GM12878 (cell line): ENCODE measurements at regions of chr12 and their contacts with region 1.

Region 1: DNA sequence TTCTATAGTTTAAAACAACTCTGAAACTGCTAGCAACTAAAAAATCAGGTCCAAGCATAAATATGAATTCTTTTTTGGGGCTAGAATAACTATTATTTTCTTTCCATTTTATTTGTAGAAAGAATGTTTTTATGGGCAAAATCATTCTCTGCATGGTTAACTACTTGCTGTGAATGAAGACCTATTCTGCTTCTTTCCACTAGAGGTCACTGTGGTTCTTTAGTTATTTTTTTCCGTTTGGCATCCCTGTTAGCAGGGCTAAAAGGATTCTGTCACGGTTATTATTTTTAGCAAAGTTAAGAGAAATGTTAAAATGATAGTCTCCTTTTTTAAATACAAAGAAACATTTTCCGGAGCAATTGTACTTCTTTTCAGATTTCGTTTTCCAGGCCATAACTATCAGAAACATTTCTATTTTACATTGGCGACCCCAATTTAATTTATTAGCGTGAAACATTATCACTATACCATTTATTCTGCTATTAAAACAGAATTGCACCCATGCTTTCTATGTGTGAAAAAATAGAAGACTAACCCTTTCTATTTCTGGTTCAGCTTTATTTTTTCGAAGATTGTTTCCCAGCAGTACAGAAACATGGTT is 404.8 kb downstream of the ATP23 start:
- DNase-seq: no peak
- ATAC-seq: peak; percentile 71
- H3K4me3 ChIP-seq: no peak overlapping the region
- H3K27ac ChIP-seq: no peak overlapping the region
- H3K4me1 ChIP-seq: no peaks in the 10 kb centered on the region
- H3K27me3 ChIP-seq: no peaks in the 10 kb centered on the region; a peak in 1 of 4 replicates
- CTCF ChIP-seq: peak; percentile 67 to 69 (median 68); a peak in 5 of 6 replicates
- EP300 ChIP-seq: no peak
- POLR2A ChIP-seq: no peak
- RAD21 ChIP-seq: peak; percentile 92

Region 2: GRCh38 chr12:58233886-58234285 is 112.2 kb before region 1 on chr12:
- CTCF ChIA-PET with region 1: no interaction called
- POLR2A ChIA-PET with region 1: no interaction called
- RAD21 ChIA-PET with region 1: no interaction called
- SMC1A ChIA-PET with region 1: no interaction called
- in situ Hi-C with region 1: no loop called
- intact Hi-C with region 1: no loop called
- DNase-seq: no peak
- ATAC-seq: no peak
- H3K4me3 ChIP-seq: no peak overlapping the region
- H3K27ac ChIP-seq: no peak overlapping the region
- H3K4me1 ChIP-seq: no peaks in the 10 kb centered on the region
- H3K27me3 ChIP-seq: no peaks in the 10 kb centered on the region
- CTCF ChIP-seq: no peak
- EP300 ChIP-seq: no peak
- POLR2A ChIP-seq: no peak
- RAD21 ChIP-seq: no peak

Region 3: GRCh38 chr12:58372298-58372697 is 26.2 kb after region 1 on chr12:
- CTCF ChIA-PET with region 1: interaction called, 13 read pairs
- POLR2A ChIA-PET with region 1: no interaction called
- RAD21 ChIA-PET with region 1: interaction called, 7 read pairs
- SMC1A ChIA-PET with region 1: interaction called, 6 read pairs
- in situ Hi-C with region 1: no loop called
- intact Hi-C with region 1: no loop called
- DNase-seq: peak; percentile 60
- ATAC-seq: peak; percentile 99
- H3K4me3 ChIP-seq: no peak overlapping the region
- H3K27ac ChIP-seq: no peak overlapping the region
- H3K4me1 ChIP-seq: no peaks in the 10 kb centered on the region
- H3K27me3 ChIP-seq: no peaks in the 10 kb centered on the region
- CTCF ChIP-seq: no peak
- EP300 ChIP-seq: 0 out of 4 replicates have a peak, but pooled peaks of 1 of the 2 experiments have one; percentile 13
- POLR2A ChIP-seq: no peak
- RAD21 ChIP-seq: no peak

Region 4: DNA sequence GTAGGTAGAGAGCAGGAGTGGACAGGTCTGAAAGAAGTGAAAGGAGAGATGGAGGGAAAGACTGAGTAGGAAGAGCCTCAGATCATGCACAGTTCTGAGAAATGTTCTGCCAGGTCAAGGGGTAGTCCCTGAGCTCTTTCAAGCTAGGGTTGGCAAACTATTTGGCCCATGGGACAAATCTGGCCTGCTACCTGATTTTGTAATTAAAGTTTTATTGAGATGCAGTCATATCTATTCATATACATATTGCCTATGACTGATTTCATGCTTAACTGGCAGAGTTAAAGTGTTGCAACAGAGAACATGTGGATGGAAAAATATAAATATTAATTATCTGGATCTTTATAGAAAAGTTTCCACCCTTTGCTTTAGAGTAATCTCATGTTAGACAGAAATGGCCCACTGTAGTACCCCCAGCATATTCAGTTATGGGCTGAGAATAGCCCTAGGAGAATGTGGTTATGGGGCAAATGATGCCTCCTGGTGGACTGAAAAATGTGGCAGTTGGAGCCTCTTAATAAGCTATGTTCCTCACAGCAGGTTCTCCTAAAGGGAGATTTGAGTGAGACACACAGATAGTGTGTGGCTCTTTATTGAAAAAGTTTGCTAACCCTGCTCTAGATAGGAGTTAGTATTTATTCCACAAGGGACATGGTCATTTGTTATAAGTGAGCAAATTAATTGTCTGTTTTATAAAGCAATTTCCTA is 97.3 kb after region 1 on chr12:
- CTCF ChIA-PET with region 1: interaction called, 54 read pairs
- POLR2A ChIA-PET with region 1: no interaction called
- RAD21 ChIA-PET with region 1: interaction called, 22 read pairs
- SMC1A ChIA-PET with region 1: interaction called, 36 read pairs
- in situ Hi-C with region 1: loop called (anchors 5 kb)
- intact Hi-C with region 1: loop called (anchors 1 kb)
- DNase-seq: no peak
- ATAC-seq: peak; percentile 85
- H3K4me3 ChIP-seq: no peak overlapping the region
- H3K27ac ChIP-seq: no peak overlapping the region
- H3K4me1 ChIP-seq: no peaks in the 10 kb centered on the region
- H3K27me3 ChIP-seq: no peaks in the 10 kb centered on the region
- CTCF ChIP-seq: peak; percentile 62 to 71 (median 65); a peak in 5 of 6 replicates
- EP300 ChIP-seq: no peak
- POLR2A ChIP-seq: no peak
- RAD21 ChIP-seq: peak; percentile 70

Region 5: DNA sequence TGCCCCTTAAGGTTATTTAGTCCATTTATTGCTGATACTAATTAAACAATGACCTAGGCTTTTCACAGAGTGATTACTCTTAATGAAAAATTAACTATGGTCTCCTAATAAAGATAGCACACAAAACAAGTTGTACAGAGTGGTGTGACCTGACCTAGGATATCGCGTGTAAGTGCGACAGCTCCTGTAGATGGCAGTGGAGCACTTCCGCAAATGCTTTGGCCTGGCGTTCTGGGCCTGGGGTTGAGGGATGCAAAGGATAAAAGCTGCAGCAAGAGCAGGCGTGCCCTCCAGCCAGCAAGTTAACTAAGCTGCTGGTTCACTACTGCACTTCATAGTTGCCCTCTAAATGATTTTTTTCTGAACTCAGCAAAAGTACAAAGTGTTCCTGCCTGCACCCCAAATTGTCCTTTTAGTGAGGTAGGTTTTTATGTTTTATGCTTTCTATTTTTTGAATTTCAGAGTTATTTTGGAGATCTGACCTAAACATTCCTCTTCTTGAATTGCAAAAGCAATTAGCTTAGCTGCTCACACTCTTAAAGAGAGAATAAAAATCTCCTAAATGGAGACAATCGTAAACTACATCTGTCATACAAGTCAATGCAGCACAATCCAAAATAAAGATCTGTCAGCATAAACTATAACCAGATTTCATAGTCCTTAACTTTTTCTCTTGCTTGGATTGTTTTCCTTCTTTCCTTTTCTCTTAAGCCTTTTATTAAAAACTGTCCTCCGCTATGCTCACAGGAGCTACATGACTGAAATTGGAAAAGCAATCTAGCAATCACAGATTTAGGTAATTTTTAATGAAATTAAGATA is 194.6 kb after region 1 on chr12:
- CTCF ChIA-PET with region 1: interaction called, 4 read pairs
- POLR2A ChIA-PET with region 1: no interaction called
- RAD21 ChIA-PET with region 1: no interaction called
- SMC1A ChIA-PET with region 1: interaction called, 3 read pairs
- in situ Hi-C with region 1: no loop called
- intact Hi-C with region 1: loop called (anchors 5 kb)
- DNase-seq: peak; percentile 3
- ATAC-seq: peak; percentile 92
- H3K4me3 ChIP-seq: no peak overlapping the region
- H3K27ac ChIP-seq: no peak overlapping the region
- H3K4me1 ChIP-seq: no peaks in the 10 kb centered on the region
- H3K27me3 ChIP-seq: no peaks in the 10 kb centered on the region
- CTCF ChIP-seq: peak; percentile 52 to 74 (median 63)
- EP300 ChIP-seq: no peak
- POLR2A ChIP-seq: no peak
- RAD21 ChIP-seq: peak; percentile 69

Region 6: DNA sequence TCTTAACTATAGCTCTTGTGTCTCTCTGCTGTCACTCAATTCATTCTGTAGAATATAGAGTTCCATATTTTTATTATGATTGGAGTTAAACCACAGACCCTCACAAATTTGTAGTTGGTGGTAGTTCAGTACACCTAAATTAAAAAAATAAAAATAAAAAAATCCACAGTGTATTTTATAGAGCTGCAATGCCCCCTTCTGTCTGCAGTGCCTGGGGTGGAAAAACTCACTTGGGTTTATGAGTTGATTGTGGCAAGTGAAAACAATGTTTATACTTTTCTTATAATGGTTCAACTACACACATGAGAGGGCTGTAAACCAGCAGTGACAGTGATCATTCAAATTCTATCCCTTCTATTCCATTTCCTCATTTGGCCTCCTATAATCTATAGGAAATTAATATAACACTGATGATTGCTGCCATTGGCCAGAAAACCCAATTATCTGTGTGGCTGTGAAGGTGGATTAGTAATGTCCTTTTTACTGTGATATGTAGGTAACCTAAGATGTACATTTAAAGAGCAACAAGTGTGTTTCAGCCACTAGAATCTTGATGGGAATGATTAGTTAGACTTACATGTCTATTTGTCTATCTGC is 741.0 kb after region 1 on chr12:
- CTCF ChIA-PET with region 1: no interaction called
- POLR2A ChIA-PET with region 1: no interaction called
- RAD21 ChIA-PET with region 1: no interaction called
- SMC1A ChIA-PET with region 1: no interaction called
- in situ Hi-C with region 1: no loop called
- intact Hi-C with region 1: loop called (anchors 10 kb)
- DNase-seq: no peak
- ATAC-seq: no peak
- H3K4me3 ChIP-seq: no peak overlapping the region
- H3K27ac ChIP-seq: no peak overlapping the region
- H3K4me1 ChIP-seq: no peaks in the 10 kb centered on the region
- H3K27me3 ChIP-seq: no peaks in the 10 kb centered on the region
- CTCF ChIP-seq: peak in 2 of 3 experiments; percentile 6 to 17; a peak in 1 of 6 replicates
- EP300 ChIP-seq: no peak
- POLR2A ChIP-seq: no peak
- RAD21 ChIP-seq: peak; percentile 52

Region 7: DNA sequence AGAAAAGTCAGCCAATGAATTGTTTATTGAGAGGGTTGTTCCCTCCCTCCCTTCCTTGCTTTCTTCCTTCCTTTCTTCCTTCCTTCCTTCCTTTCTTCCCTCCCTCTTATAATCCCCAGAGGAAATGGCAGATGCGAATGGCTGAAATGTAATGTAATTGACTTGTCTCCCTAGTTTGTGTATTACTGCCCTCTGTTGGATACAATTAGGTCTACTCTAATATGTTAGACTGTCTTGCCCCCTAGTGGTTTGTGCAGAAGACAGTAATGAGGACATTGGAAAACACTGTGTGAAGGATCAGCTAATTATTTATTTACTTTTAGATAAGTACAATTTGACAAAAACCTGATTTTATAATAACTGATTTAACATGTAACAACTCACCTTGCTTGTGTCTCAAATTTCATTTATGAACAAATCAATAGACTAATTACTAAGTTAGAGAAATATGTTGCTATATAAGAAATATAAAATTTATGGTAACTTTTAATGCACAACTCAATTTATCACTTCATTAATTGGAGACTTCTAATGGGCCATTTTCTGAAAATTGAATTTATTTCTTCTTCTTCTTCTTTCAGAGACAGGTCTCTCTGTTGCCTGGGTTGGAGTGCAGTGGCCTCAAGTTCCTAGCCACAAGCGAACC is 804.0 kb after region 1 on chr12:
- CTCF ChIA-PET with region 1: interaction called, 6 read pairs
- POLR2A ChIA-PET with region 1: no interaction called
- RAD21 ChIA-PET with region 1: no interaction called
- SMC1A ChIA-PET with region 1: interaction called, 3 read pairs
- in situ Hi-C with region 1: loop called (anchors 5 kb)
- intact Hi-C with region 1: loop called (anchors 1 kb)
- DNase-seq: peak; percentile 21
- ATAC-seq: peak; percentile 100
- H3K4me3 ChIP-seq: no peak overlapping the region
- H3K27ac ChIP-seq: no peak overlapping the region
- H3K4me1 ChIP-seq: no peaks in the 10 kb centered on the region
- H3K27me3 ChIP-seq: no peaks in the 10 kb centered on the region
- CTCF ChIP-seq: peak; percentile 86 to 99 (median 87); a peak in 5 of 6 replicates
- EP300 ChIP-seq: no peak
- POLR2A ChIP-seq: no peak
- RAD21 ChIP-seq: peak; percentile 89